Head of caudate nucleus (tissue), 42 donors: ENCODE measurements at regions of chr12 and their contacts with region 1.

Region 1: DNA sequence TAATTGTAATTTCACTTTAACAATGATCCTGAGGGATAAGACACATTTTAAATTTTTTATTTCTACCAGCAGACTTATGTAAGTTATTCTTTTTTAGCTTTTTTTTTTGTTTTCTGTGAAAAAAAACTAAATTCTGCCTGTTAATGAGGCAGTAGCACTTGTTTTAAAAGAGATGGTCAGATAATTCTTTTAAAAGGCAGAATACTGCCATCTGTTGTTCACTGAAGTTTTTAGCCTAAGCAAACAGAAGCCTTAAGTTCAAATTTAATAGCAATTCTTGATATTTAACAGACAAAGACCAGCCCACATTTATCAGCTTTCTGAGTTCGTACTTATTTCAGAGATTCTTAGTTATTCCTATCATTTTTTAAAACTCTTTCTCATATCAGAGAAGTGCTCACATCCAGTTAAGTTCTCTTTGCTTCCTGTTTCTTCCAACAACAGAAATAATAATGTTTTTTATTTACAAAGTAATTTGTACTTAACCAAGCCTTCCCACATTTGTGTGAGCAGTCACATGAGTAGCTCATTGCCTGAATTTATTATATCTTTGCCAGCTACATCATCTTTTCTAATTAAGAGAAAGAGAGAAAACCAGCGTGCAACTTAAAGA is 93.4 kb upstream of the SLCO1C1 start:
- DNase-seq: no peak

Region 2: GRCh38 chr12:20463913-20464524 is 137.8 kb before region 1 on chr12:
- intact Hi-C with region 1: no loop called
- DNase-seq: peak in 1 of 42 donors; percentile 27

Region 3: GRCh38 chr12:20489645-20490044 is 112.1 kb before region 1 on chr12:
- intact Hi-C with region 1: loop called (anchors 5 kb)
- DNase-seq: no peak